Dorsolateral prefrontal cortex (tissue), 120 donors: ENCODE measurements at regions of chr6 and their contacts with region 1.

Region 1: GRCh38 chr6:110682460-110682853 is 132.8 kb downstream of the CDK19 start:
- DNase-seq: peak in 3 of 10 donors; percentile 51 to 69 (median 64)
- H3K4me3 ChIP-seq: peak overlapping the region in 6 of 59 donors; percentile 2 to 30 (median 10)
- H3K27ac ChIP-seq: peak overlapping the region in 54 of 59 donors; percentile 7 to 96 (median 82)
- H3K27me3 ChIP-seq: no peaks in the 10 kb centered on the region
- CTCF ChIP-seq: peak; percentile 45 to 89 (median 78)

Region 2: DNA sequence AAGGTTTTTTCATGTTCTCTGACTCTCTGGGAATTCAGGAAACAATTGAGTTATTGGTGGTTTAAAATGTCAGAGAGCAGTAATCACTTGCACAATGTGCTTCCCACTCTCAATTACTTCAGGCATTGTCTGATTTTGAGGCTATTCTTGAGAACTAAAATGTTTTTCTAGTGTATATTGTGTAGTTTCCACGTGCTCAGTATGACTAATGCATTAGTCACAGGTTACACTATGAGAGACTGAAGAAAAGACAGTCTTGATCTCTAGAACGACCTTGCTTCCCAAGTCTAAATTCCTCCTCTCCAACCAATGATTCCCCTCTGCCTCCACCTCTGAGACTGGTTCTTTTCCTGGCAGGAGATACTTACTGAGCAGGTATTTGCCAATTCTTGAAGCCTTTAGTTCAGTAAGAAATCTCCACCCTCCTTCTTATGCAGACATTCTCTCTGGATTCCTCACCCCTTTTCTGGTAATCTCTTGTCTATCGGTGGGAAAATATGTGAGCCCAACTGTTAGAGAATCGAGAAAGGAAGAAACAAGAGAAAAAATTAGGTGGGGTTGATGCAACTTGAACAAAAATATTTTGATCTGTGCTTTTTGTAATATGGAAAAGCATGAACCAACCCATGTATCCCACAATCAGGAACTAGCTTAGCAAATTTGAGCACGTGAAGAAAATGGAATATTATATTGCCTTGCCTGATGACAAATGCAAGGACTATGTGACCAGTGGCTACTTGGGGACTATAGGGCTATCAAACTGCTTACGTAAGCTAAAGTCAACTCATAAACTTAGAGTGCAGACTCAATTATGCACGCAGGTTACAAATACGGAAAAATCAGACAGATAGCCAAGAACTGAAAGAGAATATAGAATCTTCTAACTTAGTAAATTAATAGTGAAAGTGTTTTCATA is 145.0 kb before region 1 on chr6:
- intact Hi-C with region 1: loop called (anchors 5 to 10 kb)
- DNase-seq: no peak
- H3K4me3 ChIP-seq: no peak overlapping the region
- H3K27ac ChIP-seq: peak overlapping the region; percentile 52 to 100 (median 99)
- H3K27me3 ChIP-seq: no peaks in the 10 kb centered on the region
- CTCF ChIP-seq: peak in 2 of 56 donors; percentile 5 to 16

Region 3: DNA sequence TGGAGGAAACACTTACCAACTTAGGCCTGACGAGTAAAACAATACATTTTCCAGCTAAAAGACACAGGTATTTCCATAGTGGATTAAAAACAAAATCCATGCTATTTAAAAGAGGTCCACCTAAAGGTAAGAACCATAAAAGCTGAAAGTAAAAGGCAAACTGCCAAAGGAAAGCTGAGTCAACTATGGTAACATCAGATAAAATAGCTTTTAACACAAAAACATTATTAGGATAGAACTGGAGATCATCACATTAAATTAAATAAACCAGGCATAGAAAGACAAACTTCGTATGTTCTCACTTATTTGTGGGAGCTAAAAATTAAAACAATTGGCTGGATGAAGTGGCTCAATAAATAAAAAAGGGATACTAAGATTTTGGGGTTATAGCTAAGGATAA is 39.3 kb before region 1 on chr6:
- intact Hi-C with region 1: no loop called
- DNase-seq: no peak
- H3K4me3 ChIP-seq: no peak overlapping the region
- H3K27ac ChIP-seq: peak overlapping the region in 31 of 59 donors; percentile 1 to 70 (median 40)
- H3K27me3 ChIP-seq: no peaks in the 10 kb centered on the region
- CTCF ChIP-seq: no peak

Region 4: DNA sequence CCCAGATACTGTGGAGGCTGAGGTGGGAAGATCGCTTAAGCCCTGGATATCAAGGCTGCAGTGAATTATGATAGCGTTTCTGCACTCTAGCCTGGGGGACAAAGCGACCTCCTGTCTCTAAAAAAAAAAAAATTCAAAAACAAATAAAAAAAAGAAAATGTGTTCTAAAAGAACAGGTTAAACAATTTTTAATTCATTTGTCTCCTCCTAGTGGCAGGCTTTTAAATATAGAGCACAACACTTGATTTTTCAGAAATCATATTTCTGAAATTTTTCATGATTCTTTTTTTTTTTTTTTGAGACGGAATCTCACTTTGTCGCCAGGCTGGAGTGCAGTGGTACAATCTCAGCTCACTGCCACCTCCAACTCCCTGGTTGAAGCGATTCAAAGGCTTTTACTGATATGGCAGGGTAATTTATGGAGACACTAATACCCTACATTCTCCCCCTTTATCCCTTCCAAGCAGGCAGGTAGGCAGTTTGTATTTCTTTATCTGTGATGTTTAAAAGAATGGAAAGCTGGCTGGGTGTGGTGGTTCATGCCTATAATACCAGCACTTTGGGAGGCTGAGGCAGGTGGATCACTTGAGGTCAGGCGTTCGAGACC is 267.3 kb after region 1 on chr6:
- intact Hi-C with region 1: loop called (anchors 2 kb)
- DNase-seq: no peak
- H3K4me3 ChIP-seq: peak overlapping the region in 44 of 59 donors; percentile 6 to 56 (median 30)
- H3K27ac ChIP-seq: peak overlapping the region in 10 of 59 donors; percentile 8 to 65 (median 21)
- H3K27me3 ChIP-seq: no peaks in the 10 kb centered on the region
- CTCF ChIP-seq: peak; percentile 25 to 87 (median 68)